ENCODE measurements at regions of chr15 and their contacts with region 1.

Region 1: GRCh38 chr15:23648920-23649515 is 1.4 kb upstream of the MAGEL2 start:
- DNase-seq: peak; percentile 40
- H3K4me3 ChIP-seq: no peak overlapping the region
- H3K27ac ChIP-seq: no peak overlapping the region
- H3K4me1 ChIP-seq: peaks cover 0 to 5% (median 2%) of the 10 kb centered on the region in 4 donors
- H3K27me3 ChIP-seq: peaks cover 19% of the 10 kb centered on the region
- CTCF ChIP-seq: peak; percentile 38 to 59 (median 42)
- EP300 ChIP-seq: no peak
- POLR2A ChIP-seq: no peak

Region 2: GRCh38 chr15:23708332-23708731 is 59.3 kb after region 1 on chr15:
- in situ Hi-C with region 1: no loop called
- intact Hi-C with region 1: no loop called
- DNase-seq: no peak
- H3K4me3 ChIP-seq: no peak overlapping the region
- H3K27ac ChIP-seq: no peak overlapping the region
- H3K4me1 ChIP-seq: no peaks in the 10 kb centered on the region
- H3K27me3 ChIP-seq: no peaks in the 10 kb centered on the region
- CTCF ChIP-seq: no peak
- EP300 ChIP-seq: no peak
- POLR2A ChIP-seq: no peak

Region 3: DNA sequence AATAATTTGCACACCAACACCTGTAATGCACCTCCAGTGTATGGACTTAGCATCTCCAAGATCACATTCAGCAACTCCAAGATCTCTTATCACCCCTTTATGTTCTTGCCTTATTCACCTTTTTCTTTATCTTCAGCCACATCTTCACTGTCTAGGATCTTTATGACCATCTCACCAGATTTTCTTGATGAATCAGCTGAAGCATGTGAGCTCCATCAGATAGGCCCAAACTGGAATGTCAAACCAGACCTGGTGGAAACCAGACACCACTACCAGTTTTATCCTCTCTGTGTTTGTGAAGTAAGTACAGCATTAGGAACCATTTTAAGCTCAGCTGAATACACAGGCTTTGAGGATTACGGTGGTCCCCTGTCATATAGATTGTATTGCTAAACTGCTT is 368.4 kb after region 1 on chr15:
- in situ Hi-C with region 1: no loop called
- intact Hi-C with region 1: no loop called
- DNase-seq: no peak
- H3K4me3 ChIP-seq: no peak overlapping the region
- H3K27ac ChIP-seq: no peak overlapping the region
- H3K4me1 ChIP-seq: no peaks in the 10 kb centered on the region
- H3K27me3 ChIP-seq: no peaks in the 10 kb centered on the region
- CTCF ChIP-seq: no peak
- EP300 ChIP-seq: no peak
- POLR2A ChIP-seq: no peak

Region 4: GRCh38 chr15:25568751-25569150 is 1919.7 kb after region 1 on chr15:
- in situ Hi-C with region 1: no loop called
- intact Hi-C with region 1: loop called (anchors 10 kb)
- DNase-seq: no peak
- H3K4me3 ChIP-seq: no peak overlapping the region
- H3K27ac ChIP-seq: no peak overlapping the region
- H3K4me1 ChIP-seq: no peaks in the 10 kb centered on the region
- H3K27me3 ChIP-seq: no peaks in the 10 kb centered on the region
- CTCF ChIP-seq: no peak
- EP300 ChIP-seq: no peak
- POLR2A ChIP-seq: no peak

Measured in transverse colon (tissue), 4 donors.